Heart right ventricle (tissue), 16 donors: ENCODE measurements at regions of chr5 and their contacts with region 1.

Region 1: DNA sequence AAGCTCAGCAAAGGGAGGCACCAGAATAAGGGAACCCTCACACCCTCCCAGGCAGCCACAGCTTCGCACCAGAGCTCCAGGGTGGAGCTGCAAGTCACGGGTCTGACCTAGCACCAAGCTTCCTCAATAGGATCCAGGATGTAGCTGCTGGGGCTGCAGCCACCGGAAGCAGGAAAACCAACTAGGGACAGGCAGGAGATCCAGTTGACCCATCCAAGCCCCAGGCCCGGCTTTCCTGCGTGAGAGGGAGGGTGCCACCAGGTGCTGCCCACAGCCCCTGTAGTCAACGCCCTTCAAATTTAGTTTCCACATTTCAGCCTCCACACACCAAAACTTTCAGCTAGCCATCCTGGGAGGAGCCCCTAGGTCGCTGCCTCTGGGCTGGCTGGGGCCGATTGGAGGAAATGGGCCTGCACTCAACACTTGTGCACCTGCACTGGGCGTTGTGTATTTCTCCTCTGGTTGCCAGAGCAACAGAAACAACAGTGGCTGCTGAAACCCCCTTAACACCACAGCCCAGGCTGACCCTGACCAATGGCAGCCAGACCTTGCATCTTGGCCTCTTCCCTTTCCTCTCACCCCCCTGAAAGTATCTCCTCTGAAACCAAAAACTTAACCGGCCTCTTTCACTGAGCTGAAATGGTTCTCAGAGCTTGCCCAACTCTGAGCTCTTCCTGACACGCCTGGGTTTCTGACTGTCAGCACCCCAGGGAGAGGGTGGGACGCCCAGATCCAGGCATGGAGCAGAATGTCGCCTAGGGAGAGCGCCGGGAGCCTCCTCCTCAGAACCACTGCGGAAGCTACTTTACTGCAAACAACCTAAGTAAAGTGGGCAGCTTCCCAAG is 226.5 kb upstream of the MAP3K1 start:
- DNase-seq: peak; percentile 58 to 66
- ATAC-seq: peak; percentile 44 to 83 (median 68)
- H3K4me3 ChIP-seq: no peak overlapping the region
- H3K27ac ChIP-seq: peak overlapping the region; percentile 8 to 80 (median 69)
- H3K4me1 ChIP-seq: peaks cover 7 to 50% (median 41%) of the 10 kb centered on the region in 9 donors
- H3K27me3 ChIP-seq: no peaks in the 10 kb centered on the region
- CTCF ChIP-seq: no peak

Region 2: GRCh38 chr5:56279979-56280378 is 308.9 kb before region 1 on chr5:
- intact Hi-C with region 1: loop called in 2 of 10 experiments (anchors 10 kb)
- DNase-seq: no peak
- ATAC-seq: peak in 5 of 8 donors; percentile 34 to 52 (median 43)
- H3K4me3 ChIP-seq: no peak overlapping the region
- H3K27ac ChIP-seq: peak overlapping the region in 1 of 10 donors; percentile 15
- H3K4me1 ChIP-seq: peaks cover 4 to 22% (median 15%) of the 10 kb centered on the region in 9 donors
- H3K27me3 ChIP-seq: no peaks in the 10 kb centered on the region
- CTCF ChIP-seq: no peak

Region 3: GRCh38 chr5:56481428-56482357 is 107.2 kb before region 1 on chr5:
- intact Hi-C with region 1: loop called in 2 of 10 experiments (anchors 5 to 10 kb)
- DNase-seq: peak; percentile 45 to 80
- ATAC-seq: peak; percentile 48 to 75 (median 60)
- H3K4me3 ChIP-seq: peak overlapping the region; percentile 29 to 76 (median 66)
- H3K27ac ChIP-seq: peak overlapping the region; percentile 86 to 99 (median 96)
- H3K4me1 ChIP-seq: peaks cover 0 to 52% (median 16%) of the 10 kb centered on the region in 9 donors
- H3K27me3 ChIP-seq: no peaks in the 10 kb centered on the region
- CTCF ChIP-seq: peak in 7 of 9 donors; percentile 21 to 56 (median 36)

Region 4: DNA sequence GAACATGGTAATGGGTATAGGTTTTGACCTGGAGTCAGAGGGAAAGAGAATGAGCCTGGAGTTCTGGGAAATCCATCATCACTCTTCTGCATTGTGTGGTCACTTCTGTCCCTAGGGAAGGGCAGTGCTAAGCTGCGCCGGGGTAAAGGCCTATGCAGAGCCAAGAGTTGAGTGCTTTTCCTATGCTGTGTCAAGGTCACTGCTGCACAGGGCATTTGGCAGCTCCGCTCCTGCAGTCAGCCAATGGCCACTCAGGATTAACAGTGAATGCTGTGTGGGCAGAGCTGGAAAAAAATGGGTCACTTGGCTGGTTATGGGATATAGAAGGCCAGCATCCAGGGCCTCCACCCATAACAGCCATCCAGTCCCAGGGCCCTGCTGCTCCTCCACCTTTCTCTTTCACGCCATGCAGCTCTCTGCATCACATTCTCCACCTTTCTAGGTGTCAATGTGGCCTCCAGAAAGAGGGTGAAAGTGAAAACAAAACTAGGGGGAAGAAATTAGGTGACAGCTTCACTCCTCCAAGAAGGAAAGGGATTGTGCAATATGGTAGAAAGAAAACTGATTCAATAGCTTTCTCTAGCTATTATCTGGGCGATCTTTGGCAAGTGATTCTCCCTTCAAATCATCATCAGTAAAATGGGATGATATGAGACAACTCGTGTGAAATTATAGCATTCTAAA is 76.4 kb before region 1 on chr5:
- intact Hi-C with region 1: loop called in 1 of 10 experiments (anchors 5 kb)
- DNase-seq: peak; percentile 53 to 66
- ATAC-seq: peak; percentile 85 to 98 (median 96)
- H3K4me3 ChIP-seq: no peak overlapping the region
- H3K27ac ChIP-seq: peak overlapping the region in 5 of 10 donors; percentile 5 to 51 (median 34)
- H3K4me1 ChIP-seq: peaks cover 3 to 62% (median 37%) of the 10 kb centered on the region in 9 donors
- H3K27me3 ChIP-seq: no peaks in the 10 kb centered on the region
- CTCF ChIP-seq: no peak

Region 5: DNA sequence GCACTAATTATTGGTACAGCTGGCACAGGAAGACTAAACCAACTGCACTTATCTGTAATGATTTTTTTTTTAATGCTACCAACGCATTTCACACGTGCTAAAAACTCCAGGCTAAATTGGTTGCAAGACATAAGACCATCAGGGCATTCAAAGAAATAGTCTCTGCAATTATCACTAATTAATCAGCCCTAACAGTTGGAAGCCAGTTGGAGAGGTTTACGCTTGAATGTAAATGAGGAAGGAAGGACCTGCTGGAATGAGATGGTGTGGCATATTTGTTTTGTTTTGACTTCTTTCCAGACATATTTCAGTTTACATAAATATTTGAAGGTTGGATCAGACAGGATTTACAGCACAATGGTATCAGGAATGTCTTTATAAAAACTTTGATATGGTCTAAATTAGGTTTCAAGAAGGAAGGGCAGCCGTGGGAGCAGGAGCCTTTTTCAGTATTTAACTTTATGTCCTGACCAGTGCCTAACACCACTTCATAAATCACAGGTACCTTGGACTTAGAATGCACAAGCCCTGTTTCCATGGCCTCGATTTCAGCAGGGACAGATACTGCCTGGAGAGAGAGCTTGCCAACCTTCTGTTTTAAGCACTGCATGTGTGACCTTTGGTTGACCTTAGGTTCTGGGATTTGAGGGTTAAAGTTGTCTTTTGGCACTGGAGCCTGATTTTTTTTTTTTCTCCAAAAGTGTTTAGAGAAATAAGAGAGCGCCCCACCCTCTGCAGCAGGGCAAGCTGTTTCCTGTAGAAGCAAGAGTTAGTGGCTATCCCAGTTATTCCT is 26.7 kb after region 1 on chr5:
- intact Hi-C with region 1: loop called in 1 of 10 experiments (anchors 2 kb)
- DNase-seq: peak in 1 of 2 donors; percentile 13
- ATAC-seq: peak; percentile 71 to 88 (median 77)
- H3K4me3 ChIP-seq: peak overlapping the region in 1 of 10 donors; percentile 9
- H3K27ac ChIP-seq: peak overlapping the region in 9 of 10 donors; percentile 17 to 71 (median 49)
- H3K4me1 ChIP-seq: peaks cover 8 to 27% (median 22%) of the 10 kb centered on the region in 9 donors
- H3K27me3 ChIP-seq: no peaks in the 10 kb centered on the region
- CTCF ChIP-seq: no peak

Region 6: GRCh38 chr5:56696900-56697299 is 108.0 kb after region 1 on chr5:
- intact Hi-C with region 1: loop called in 1 of 10 experiments (anchors 5 kb)
- DNase-seq: peak in 1 of 2 donors; percentile 49
- ATAC-seq: no peak
- H3K4me3 ChIP-seq: no peak overlapping the region
- H3K27ac ChIP-seq: peak overlapping the region in 2 of 10 donors; percentile 7 to 30
- H3K4me1 ChIP-seq: peaks cover 4 to 42% (median 23%) of the 10 kb centered on the region in 9 donors
- H3K27me3 ChIP-seq: no peaks in the 10 kb centered on the region
- CTCF ChIP-seq: no peak

Region 7: DNA sequence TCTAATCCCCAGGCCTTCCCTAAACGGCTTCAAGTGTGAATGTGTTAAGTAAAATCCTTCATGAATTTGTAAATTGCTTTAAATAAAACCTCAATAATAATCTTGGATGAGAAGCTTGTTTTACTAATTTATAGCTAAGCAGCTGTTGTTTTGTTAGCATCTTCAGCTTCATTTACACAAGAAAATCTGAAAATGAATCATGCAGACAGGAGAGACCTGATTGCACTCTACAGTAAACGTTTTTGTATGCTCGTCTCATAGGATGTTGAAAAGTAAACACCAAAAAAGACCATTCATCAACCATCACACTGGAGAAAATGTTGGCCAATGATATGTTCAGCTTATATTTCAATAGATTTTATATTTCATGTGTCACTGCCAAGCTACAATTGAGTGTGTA is 186.1 kb after region 1 on chr5:
- intact Hi-C with region 1: no loop called
- DNase-seq: no peak
- ATAC-seq: no peak
- H3K4me3 ChIP-seq: no peak overlapping the region
- H3K27ac ChIP-seq: no peak overlapping the region
- H3K4me1 ChIP-seq: no peaks in the 10 kb centered on the region
- H3K27me3 ChIP-seq: no peaks in the 10 kb centered on the region
- CTCF ChIP-seq: no peak

Region 8: DNA sequence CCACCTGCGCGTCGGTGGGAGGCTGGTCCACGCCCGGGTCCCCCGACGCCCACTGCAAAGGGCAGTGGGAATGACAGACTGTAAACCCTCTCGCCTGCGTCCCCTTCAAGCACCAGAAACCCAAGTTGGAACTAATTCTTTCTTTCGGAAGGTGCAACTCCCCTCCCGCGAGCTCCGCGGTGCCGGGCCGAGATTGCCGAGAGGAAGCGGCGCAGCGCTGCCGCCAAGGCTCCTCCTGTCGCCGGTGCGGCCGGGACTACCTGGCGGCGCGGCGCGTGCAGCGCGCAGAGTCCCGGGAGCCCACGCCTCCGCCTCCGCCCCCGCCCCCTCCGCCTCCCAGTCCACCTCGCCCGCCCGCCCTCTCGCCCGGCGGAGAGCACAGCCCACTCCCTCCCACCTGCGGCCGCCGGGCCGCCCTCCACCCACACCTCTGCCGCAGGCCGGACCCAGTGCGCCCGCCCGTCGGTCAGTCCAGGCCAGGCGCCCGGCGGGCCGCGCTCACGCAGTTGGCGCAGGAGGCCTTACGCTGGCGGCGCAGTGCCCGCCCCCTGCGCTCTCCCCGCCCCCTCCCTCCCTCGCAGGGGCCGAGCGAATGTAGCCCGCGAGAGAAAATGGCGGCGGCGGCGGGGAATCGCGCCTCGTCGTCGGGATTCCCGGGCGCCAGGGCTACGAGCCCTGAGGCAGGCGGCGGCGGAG is 226.3 kb after region 1 on chr5 and contains the start of gene MAP3K1:
- intact Hi-C with region 1: loop called in 6 of 10 experiments (anchors 2 to 10 kb)
- DNase-seq: peak; percentile 72 to 84
- ATAC-seq: peak; percentile 74 to 94 (median 87)
- H3K4me3 ChIP-seq: peak within 1 kb of the TSS; percentile 64 to 96 (median 88)
- H3K27ac ChIP-seq: peak within 1 kb of the TSS; percentile 65 to 99 (median 96)
- H3K4me1 ChIP-seq: peaks cover 3 to 39% (median 28%) of the 10 kb centered on the region in 9 donors
- H3K27me3 ChIP-seq: no peaks in the 10 kb centered on the region
- CTCF ChIP-seq: peak in 4 of 9 donors; percentile 30 to 48 (median 45)
- total RNA-seq, gene MAP3K1: 4.6 to 13.3 (median 6.5) TPM